Naive thymus-derived CD4-positive, alpha-beta T cell (primary cell): ENCODE measurements at regions of chr15 and their contacts with region 1.

Region 1: GRCh38 chr15:42273102-42273899 is at the starts of genes GANC and TMEM87A:
- DNase-seq: peak; percentile 70 to 96 (median 94)
- ATAC-seq: peak; percentile 95
- H3K4me3 ChIP-seq: peak within 1 kb of the TSS; percentile 71
- H3K4me3 Mint-ChIP-seq: peak within 1 kb of the TSS; percentile 91 to 100 (median 97)
- H3K27ac ChIP-seq: peak within 1 kb of the TSS; percentile 94
- H3K27ac Mint-ChIP-seq: peak within 1 kb of the TSS; percentile 97 to 100 (median 100)
- H3K4me1 ChIP-seq: peaks cover 25 to 26% of the 10 kb centered on the region in 2 donors
- H3K4me1 Mint-ChIP-seq: peaks cover 30 to 76% (median 67%) of the 10 kb centered on the region in 7 donors
- H3K27me3 ChIP-seq: no peaks in the 10 kb centered on the region
- H3K27me3 Mint-ChIP-seq: no peaks in the 10 kb centered on the region
- total RNA-seq, gene GANC: 31.3 to 57.2 (median 45.4) TPM
- total RNA-seq, gene TMEM87A: 41.8 to 61.8 (median 53.7) TPM

Region 2: GRCh38 chr15:41283653-41284426 is 989.5 kb before region 1 on chr15:
- CTCF ChIA-PET with region 1: no interaction called
- POLR2A ChIA-PET with region 1: no interaction called
- intact Hi-C with region 1: loop called in 1 of 2 experiments (anchors 10 kb)
- DNase-seq: peak; percentile 94 to 98 (median 97)
- ATAC-seq: peak; percentile 98
- H3K4me3 ChIP-seq: peak overlapping the region; percentile 89
- H3K4me3 Mint-ChIP-seq: peak overlapping the region; percentile 90 to 100 (median 92)
- H3K27ac ChIP-seq: peak overlapping the region; percentile 91
- H3K27ac Mint-ChIP-seq: peak overlapping the region; percentile 96 to 99 (median 97)
- H3K4me1 ChIP-seq: peaks cover 21 to 31% of the 10 kb centered on the region in 2 donors
- H3K4me1 Mint-ChIP-seq: peaks cover 22 to 54% (median 51%) of the 10 kb centered on the region in 7 donors
- H3K27me3 ChIP-seq: no peaks in the 10 kb centered on the region
- H3K27me3 Mint-ChIP-seq: peaks cover 0 to 2% (median 0%) of the 10 kb centered on the region in 5 donors

Region 3: DNA sequence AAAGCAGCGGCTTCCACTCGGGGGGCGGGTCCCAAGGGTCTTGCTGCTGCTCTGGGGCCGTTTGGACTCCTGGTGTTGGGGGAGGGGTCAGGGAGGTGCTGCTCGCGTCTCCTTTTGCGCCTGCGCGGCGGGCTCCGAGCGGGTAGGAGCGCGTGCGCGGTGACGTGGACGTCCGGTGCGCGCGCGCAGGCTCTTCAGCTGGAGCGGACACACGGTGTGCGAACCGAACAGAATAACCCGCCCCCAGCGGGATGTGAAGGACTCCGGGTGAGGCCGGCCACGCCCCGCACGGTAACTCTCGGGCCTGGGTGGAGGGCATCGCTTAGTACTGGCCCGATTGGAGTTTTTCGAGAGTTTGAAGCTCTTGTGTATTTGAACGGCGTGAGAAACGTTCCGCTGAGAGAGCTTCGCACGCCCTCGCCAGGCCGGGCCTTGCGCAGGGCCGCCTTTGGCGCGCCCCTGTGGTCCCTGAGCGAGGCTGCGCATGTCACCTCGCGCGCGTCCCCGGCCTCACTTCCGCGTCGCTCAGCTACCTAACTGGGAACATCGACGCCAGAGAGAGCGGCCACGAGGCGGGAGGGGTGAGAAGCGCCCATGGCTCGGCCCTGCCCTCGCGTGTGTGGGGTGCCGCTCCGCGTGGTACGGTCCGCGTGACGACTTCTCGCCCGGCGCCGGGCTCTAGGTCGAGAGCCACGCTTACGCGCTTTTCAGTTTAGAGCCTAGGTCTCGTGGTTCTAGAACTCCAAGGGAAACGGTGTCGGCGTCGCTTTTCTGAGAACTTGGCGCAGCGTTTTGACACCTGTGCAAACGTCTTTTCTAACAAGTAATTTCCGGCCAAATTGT is 612.8 kb before region 1 on chr15 and contains the start of gene MGA:
- CTCF ChIA-PET with region 1: no interaction called
- POLR2A ChIA-PET with region 1: no interaction called
- intact Hi-C with region 1: loop called (anchors 1 to 2 kb)
- DNase-seq: peak; percentile 86 to 93 (median 91)
- ATAC-seq: peak; percentile 87
- H3K4me3 ChIP-seq: peak within 1 kb of the TSS; percentile 64
- H3K4me3 Mint-ChIP-seq: peak within 1 kb of the TSS; percentile 90 to 100 (median 92)
- H3K27ac ChIP-seq: peak within 1 kb of the TSS; percentile 76
- H3K27ac Mint-ChIP-seq: peak within 1 kb of the TSS; percentile 92 to 98 (median 96)
- H3K4me1 ChIP-seq: peaks cover 20 to 28% of the 10 kb centered on the region in 2 donors
- H3K4me1 Mint-ChIP-seq: peaks cover 16 to 64% (median 47%) of the 10 kb centered on the region in 7 donors
- H3K27me3 ChIP-seq: no peaks in the 10 kb centered on the region
- H3K27me3 Mint-ChIP-seq: peaks cover 0 to 45% (median 0%) of the 10 kb centered on the region in 5 donors
- total RNA-seq, gene MGA: 35.8 to 73.8 (median 47.3) TPM

Region 4: GRCh38 chr15:42474827-42475226 is 201.5 kb after region 1 on chr15:
- CTCF ChIA-PET with region 1: no interaction called
- POLR2A ChIA-PET with region 1: no interaction called
- intact Hi-C with region 1: loop called (anchors 5 kb)
- DNase-seq: no peak
- ATAC-seq: no peak
- H3K4me3 ChIP-seq: no peak overlapping the region
- H3K4me3 Mint-ChIP-seq: no peak overlapping the region
- H3K27ac ChIP-seq: no peak overlapping the region
- H3K27ac Mint-ChIP-seq: peak overlapping the region in 7 of 9 donors; percentile 13 to 76 (median 54)
- H3K4me1 ChIP-seq: no peaks in the 10 kb centered on the region
- H3K4me1 Mint-ChIP-seq: peaks cover 8 to 44% (median 16%) of the 10 kb centered on the region in 7 donors
- H3K27me3 ChIP-seq: no peaks in the 10 kb centered on the region
- H3K27me3 Mint-ChIP-seq: no peaks in the 10 kb centered on the region

Region 5: DNA sequence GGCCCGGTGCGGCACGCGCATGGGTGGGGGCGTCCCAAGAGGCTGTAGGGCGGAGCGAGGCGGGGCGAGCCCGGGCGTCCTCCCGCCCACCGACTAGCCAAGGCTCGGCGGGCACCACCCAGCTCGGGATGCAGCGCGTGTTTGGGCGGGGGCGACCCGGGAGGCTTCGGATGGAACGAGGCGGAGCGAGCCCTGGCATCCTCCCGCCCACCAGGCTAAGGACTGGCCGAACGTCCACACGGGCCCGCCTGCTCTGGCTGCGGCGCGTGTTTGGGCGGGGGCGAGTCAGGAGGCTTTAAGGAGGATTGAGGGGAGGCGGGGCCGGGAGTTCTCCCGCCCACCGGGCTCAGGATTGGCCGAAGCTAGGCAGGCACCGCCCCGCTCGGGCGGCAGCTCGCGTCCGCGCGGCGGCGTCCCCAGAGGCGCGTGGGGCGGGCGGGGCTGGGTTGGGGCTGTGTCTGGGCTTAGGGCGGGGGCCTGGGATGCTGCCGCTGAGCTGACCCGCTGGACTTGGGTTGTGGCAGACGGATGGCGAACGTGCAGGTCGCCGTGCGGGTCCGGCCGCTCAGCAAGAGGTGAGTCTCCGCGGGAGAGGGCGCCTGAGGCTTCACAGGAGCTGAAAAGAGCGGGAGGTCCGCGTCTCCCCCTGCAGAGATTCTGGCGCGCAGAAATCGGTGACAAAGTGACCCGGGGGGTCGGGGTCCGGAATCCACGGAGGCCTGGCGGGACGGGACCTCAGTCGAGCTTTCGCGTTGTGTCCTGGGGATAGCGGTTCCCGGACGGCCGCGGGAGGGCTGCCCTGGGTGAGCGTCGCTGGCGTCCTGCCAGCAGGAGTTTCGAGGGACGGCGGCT is 302.1 kb after region 1 on chr15 and contains the start of gene STARD9:
- CTCF ChIA-PET with region 1: no interaction called
- POLR2A ChIA-PET with region 1: interaction called, 6 read pairs
- intact Hi-C with region 1: loop called (anchors 1 kb)
- DNase-seq: peak; percentile 84 to 96 (median 93)
- ATAC-seq: peak; percentile 96
- H3K4me3 ChIP-seq: peak within 1 kb of the TSS; percentile 81
- H3K4me3 Mint-ChIP-seq: peak within 1 kb of the TSS; percentile 74 to 95 (median 92)
- H3K27ac ChIP-seq: peak within 1 kb of the TSS; percentile 58
- H3K27ac Mint-ChIP-seq: peak within 1 kb of the TSS; percentile 10 to 84 (median 76)
- H3K4me1 ChIP-seq: peaks cover 7 to 12% of the 10 kb centered on the region in 2 donors
- H3K4me1 Mint-ChIP-seq: peaks cover 14 to 36% (median 19%) of the 10 kb centered on the region in 7 donors
- H3K27me3 ChIP-seq: no peaks in the 10 kb centered on the region
- H3K27me3 Mint-ChIP-seq: peaks cover 6 to 35% (median 13%) of the 10 kb centered on the region in 5 donors
- total RNA-seq, gene STARD9: 2.4 to 10.5 (median 4.5) TPM

Region 6: GRCh38 chr15:43185157-43186017 is 912.1 kb after region 1 on chr15 and contains the start of gene CCNDBP1:
- CTCF ChIA-PET with region 1: no interaction called
- POLR2A ChIA-PET with region 1: no interaction called
- intact Hi-C with region 1: loop called in 1 of 2 experiments (anchors 2 kb)
- DNase-seq: peak; percentile 69 to 90 (median 79)
- ATAC-seq: peak; percentile 91
- H3K4me3 ChIP-seq: peak within 1 kb of the TSS; percentile 91
- H3K4me3 Mint-ChIP-seq: peak within 1 kb of the TSS; percentile 90 to 98 (median 96)
- H3K27ac ChIP-seq: peak within 1 kb of the TSS; percentile 95
- H3K27ac Mint-ChIP-seq: peak within 1 kb of the TSS; percentile 95 to 99 (median 98)
- H3K4me1 ChIP-seq: peaks cover 16 to 22% of the 10 kb centered on the region in 2 donors
- H3K4me1 Mint-ChIP-seq: peaks cover 19 to 54% (median 35%) of the 10 kb centered on the region in 7 donors
- H3K27me3 ChIP-seq: no peaks in the 10 kb centered on the region
- H3K27me3 Mint-ChIP-seq: no peaks in the 10 kb centered on the region
- total RNA-seq, gene CCNDBP1: 72.3 to 110 (median 100) TPM

Region 7: DNA sequence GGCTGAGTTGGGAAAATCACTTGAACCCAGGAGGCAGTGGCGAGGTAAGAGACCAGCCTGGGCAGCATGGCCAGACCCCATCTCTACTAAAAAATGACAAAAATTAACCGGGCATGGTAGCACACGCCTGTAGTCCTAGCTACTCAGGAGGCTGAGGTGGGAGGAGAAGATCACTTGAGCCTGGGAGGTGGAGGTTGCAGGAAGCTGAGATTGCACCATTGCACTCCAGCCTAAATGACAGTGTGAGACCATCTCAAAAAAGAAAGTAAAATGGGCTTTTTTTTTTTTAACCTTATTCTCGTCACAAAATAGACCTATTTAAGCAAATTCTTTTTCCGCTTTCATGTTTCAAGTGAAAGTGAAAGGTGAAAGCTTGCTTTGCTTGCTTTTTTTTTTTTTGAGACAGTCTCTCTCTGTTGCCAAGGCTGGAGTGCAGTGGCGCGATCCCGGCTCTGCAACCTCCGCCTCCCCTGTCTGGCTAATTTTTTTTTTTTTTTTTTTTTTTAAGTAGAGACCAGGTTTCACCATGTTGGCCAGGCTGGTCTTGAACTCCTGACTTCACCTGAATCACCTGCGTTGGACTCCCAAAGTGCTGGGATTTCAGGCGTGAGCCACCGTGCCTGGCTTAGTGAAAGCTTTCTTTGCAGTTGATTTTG is 1476.5 kb after region 1 on chr15:
- CTCF ChIA-PET with region 1: no interaction called
- POLR2A ChIA-PET with region 1: no interaction called
- intact Hi-C with region 1: loop called in 1 of 2 experiments (anchors 5 kb)
- DNase-seq: peak in 8 of 9 donors; percentile 38 to 84 (median 77)
- ATAC-seq: peak; percentile 59
- H3K4me3 ChIP-seq: peak overlapping the region; percentile 53
- H3K4me3 Mint-ChIP-seq: peak overlapping the region; percentile 75 to 97 (median 82)
- H3K27ac ChIP-seq: peak overlapping the region; percentile 75
- H3K27ac Mint-ChIP-seq: peak overlapping the region; percentile 77 to 92 (median 90)
- H3K4me1 ChIP-seq: peaks cover 30 to 43% of the 10 kb centered on the region in 2 donors
- H3K4me1 Mint-ChIP-seq: peaks cover 37 to 66% (median 54%) of the 10 kb centered on the region in 7 donors
- H3K27me3 ChIP-seq: no peaks in the 10 kb centered on the region
- H3K27me3 Mint-ChIP-seq: no peaks in the 10 kb centered on the region